ENCODE measurements at regions of chr6 and their contacts with region 1.

Region 1: DNA sequence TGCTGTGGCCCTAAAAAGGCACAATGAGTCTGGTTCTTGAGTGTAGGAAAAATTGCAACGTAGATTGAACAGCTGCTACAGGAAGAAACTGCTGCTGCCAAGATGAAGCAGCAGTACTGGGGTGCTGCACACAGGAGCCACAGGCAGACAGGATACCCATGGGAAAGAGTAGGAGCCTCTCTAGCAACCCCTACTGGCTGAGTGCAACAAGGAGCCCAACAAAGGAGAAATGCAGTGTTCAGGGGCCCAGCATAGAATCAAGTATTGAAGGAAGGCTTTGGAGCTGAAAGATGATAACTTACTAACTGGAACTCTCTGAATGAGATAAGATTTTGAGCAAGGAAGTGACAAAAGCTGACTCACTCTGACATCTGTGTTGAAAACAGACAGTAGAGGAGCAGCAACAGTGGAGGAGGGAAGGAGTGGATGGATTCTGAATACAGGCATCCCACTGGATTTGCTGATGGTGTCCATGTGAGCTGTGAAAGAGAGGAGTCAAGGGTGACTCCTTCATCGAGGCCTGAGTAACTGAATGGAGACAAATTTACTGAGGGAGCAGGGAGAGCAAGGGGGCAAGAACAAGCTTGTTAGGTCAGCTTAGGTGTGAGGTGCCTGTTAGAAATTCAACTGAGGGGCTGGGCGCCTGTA is 534.7 kb upstream of the JARID2 start:
- DNase-seq: peak; percentile 86
- H3K4me3 Mint-ChIP-seq: peak overlapping the region; percentile 31
- H3K27ac Mint-ChIP-seq: peak overlapping the region; percentile 87
- H3K4me1 Mint-ChIP-seq: peaks cover 36% of the 10 kb centered on the region
- H3K27me3 Mint-ChIP-seq: no peaks in the 10 kb centered on the region

Region 2: GRCh38 chr6:13795041-13795750 is 916.0 kb before region 1 on chr6:
- CTCF ChIA-PET with region 1: no interaction called
- intact Hi-C with region 1: loop called (anchors 1 kb)
- DNase-seq: peak; percentile 97
- H3K4me3 Mint-ChIP-seq: no peak overlapping the region
- H3K27ac Mint-ChIP-seq: no peak overlapping the region
- H3K4me1 Mint-ChIP-seq: peaks cover 14% of the 10 kb centered on the region
- H3K27me3 Mint-ChIP-seq: no peaks in the 10 kb centered on the region

Region 3: DNA sequence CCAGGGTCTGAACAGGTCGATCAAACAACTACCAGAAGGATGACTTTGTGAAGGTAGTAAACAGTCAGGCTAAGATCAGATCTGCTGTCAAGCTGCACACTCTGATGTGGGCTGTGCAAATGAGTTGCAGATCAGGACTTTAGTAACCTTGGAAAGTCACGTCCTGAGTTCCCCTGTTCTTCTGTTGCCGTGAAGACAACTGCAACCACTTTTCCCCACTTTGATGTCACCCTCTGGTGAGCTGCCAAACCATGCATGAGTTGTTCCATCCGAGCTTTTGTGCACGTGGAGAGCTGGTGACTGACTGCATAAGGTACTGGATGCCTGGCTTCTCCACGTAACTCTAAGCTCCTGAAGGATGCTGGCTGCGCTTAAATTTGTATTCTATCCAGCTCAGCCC is 482.6 kb before region 1 on chr6:
- CTCF ChIA-PET with region 1: no interaction called
- intact Hi-C with region 1: loop called (anchors 5 kb)
- DNase-seq: peak; percentile 82
- H3K4me3 Mint-ChIP-seq: no peak overlapping the region
- H3K27ac Mint-ChIP-seq: no peak overlapping the region
- H3K4me1 Mint-ChIP-seq: peaks cover 21% of the 10 kb centered on the region
- H3K27me3 Mint-ChIP-seq: no peaks in the 10 kb centered on the region

Region 4: DNA sequence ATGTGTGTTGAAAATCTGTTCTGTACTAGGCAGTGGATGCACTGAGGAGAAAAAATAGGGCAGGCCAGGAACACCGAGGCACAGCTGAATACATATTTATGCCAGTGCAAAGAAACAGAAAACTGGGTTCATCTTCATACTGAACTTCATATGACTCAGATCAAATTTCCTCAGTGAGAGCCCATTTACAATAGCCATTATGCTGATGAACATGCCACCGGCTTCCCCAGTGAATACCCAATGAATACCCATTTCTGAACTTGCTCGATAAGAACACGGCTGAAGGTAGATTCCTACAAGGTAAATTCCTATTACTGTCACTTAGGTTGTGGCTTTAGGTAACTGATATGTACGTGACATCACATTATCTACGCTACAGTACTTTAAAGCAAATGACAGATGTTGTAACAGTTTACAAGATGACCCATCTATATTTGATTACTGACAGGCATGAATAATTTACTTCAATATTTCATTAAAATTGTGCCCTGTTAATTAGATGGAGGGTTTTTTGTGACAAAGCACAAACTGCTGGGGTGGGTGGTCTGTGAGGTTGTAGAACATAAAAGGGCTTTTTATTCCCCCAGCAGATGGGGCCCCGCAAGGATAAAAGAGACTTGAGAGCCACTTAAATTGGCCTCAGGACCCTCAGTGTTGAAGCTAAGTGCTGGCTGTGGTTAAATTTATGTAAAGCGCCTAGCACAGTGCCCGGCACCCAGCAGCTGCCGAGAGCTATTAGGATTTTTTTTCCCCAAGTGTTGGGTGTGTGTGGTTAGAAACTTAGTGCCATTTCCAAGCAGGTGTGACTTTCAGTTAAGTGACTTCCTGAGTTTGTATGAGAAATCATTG is 329.1 kb before region 1 on chr6:
- CTCF ChIA-PET with region 1: no interaction called
- intact Hi-C with region 1: loop called (anchors 5 kb)
- DNase-seq: peak; percentile 54
- H3K4me3 Mint-ChIP-seq: no peak overlapping the region
- H3K27ac Mint-ChIP-seq: peak overlapping the region; percentile 41
- H3K4me1 Mint-ChIP-seq: peaks cover 36% of the 10 kb centered on the region
- H3K27me3 Mint-ChIP-seq: peaks cover 2% of the 10 kb centered on the region

Region 5: GRCh38 chr6:14542670-14543366 is 168.4 kb before region 1 on chr6:
- CTCF ChIA-PET with region 1: interaction called, 4 read pairs
- intact Hi-C with region 1: loop called (anchors 1 kb)
- DNase-seq: peak; percentile 92
- H3K4me3 Mint-ChIP-seq: no peak overlapping the region
- H3K27ac Mint-ChIP-seq: peak overlapping the region; percentile 64
- H3K4me1 Mint-ChIP-seq: peaks cover 24% of the 10 kb centered on the region
- H3K27me3 Mint-ChIP-seq: no peaks in the 10 kb centered on the region

Region 6: GRCh38 chr6:14674458-14674857 is 36.7 kb before region 1 on chr6:
- CTCF ChIA-PET with region 1: no interaction called
- intact Hi-C with region 1: loop called (anchors 2 kb)
- DNase-seq: peak; percentile 12
- H3K4me3 Mint-ChIP-seq: no peak overlapping the region
- H3K27ac Mint-ChIP-seq: peak overlapping the region; percentile 80
- H3K4me1 Mint-ChIP-seq: peaks cover 19% of the 10 kb centered on the region
- H3K27me3 Mint-ChIP-seq: no peaks in the 10 kb centered on the region